HAP-1 (cell line): ENCODE measurements at regions of chr10 and their contacts with region 1.

Region 1: GRCh38 chr10:102352066-102352715 is 43.3 kb upstream of the NFKB2 start:
- DNase-seq: peak; percentile 15 to 84
- H3K4me3 ChIP-seq: no peak overlapping the region
- H3K4me1 ChIP-seq: no peaks in the 10 kb centered on the region
- H3K27me3 ChIP-seq: no peaks in the 10 kb centered on the region

Region 2: DNA sequence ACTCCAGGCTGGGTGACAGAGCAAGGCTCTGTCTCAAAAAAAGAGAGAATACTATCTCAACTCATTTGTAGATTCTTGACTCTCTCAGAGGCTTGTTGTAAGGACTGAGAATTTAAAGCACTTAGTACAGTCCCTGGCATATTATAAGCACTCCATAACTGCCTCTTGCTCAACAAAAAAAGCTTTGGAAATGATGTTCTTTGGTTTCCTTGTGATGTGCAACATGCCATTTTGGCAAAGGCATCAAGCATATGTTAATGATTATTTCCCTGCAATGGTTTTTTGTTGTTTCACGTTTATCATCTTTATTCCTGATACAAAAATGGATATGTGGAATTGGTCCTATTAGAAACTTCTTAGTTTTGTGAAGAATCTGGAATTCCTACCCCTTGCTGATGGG is 184.3 kb before region 1 on chr10:
- in situ Hi-C with region 1: loop called (anchors 10 kb)
- DNase-seq: no peak
- H3K4me3 ChIP-seq: no peak overlapping the region
- H3K4me1 ChIP-seq: peaks cover 19% of the 10 kb centered on the region
- H3K27me3 ChIP-seq: no peaks in the 10 kb centered on the region

Region 3: GRCh38 chr10:102225646-102226541 is 126.3 kb before region 1 on chr10 and contains the start of gene ELOVL3:
- in situ Hi-C with region 1: loop called (anchors 5 kb)
- DNase-seq: peak; percentile 94 to 97
- H3K4me3 ChIP-seq: no peak within 1 kb of the TSS
- H3K4me1 ChIP-seq: peaks cover 16% of the 10 kb centered on the region
- H3K27me3 ChIP-seq: peaks cover 2% of the 10 kb centered on the region; the same call in 1 of the 2 replicates

Region 4: DNA sequence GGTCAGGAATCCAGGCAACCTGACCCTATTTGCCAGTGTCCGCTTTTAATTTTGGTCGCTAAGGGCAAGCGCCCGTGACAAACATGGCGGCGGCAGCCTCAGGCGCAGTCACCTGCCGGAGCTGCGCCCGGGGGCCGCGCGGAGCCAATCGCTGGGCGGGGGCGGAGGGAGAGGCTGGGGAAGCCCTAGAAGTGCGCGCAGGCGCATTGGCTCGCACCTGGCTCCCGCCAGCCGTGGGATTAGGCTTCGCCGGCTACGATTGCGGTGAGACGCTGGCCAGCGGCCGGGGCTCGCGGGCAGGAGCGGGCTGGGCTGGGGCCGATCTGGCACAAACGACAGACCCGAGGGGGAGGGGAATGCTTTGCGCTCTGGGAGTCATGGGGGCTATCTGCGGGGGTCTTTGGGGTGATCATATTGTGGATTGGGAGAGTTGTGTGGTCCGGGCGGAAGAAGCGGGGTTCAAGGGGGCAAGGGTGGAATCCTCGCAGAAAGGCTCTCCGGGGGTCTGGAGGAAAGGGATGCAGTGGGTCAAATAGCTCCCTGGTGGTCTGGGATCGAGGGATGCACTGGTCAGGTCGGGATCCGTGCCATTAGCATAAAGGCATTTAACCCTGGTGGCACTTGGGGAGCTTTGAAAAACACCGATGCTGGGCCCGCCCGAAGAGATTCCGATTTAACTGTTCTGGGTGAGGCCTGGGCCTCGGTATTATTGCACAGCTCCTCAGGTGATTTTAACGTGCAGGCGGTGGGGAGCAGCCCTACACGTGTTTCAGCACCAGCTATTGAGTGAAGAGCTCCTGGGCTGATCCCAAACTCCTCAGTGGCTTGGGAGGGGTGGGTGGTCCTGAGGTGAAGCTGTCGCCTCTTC is 109.2 kb after region 1 on chr10:
- in situ Hi-C with region 1: no loop called
- DNase-seq: peak; percentile 90 to 97
- H3K4me3 ChIP-seq: peak overlapping the region; percentile 36
- H3K4me1 ChIP-seq: peaks cover 10% of the 10 kb centered on the region
- H3K27me3 ChIP-seq: no peaks in the 10 kb centered on the region